Activated CD4-positive, alpha-beta memory T cell treated with anti-CD3 and anti-CD28 coated beads for 36 hours (primary cell): ENCODE measurements at regions of chr2 and their contacts with region 1.

Region 1: GRCh38 chr2:204108330-204108751 is 171.8 kb downstream of the ICOS start:
- DNase-seq: peak; percentile 78
- H3K4me3 Mint-ChIP-seq: peak overlapping the region; percentile 55
- H3K27ac Mint-ChIP-seq: peak overlapping the region; percentile 90
- H3K4me1 Mint-ChIP-seq: peaks cover 71% of the 10 kb centered on the region
- H3K27me3 Mint-ChIP-seq: peaks cover 4% of the 10 kb centered on the region

Region 2: GRCh38 chr2:204060841-204061240 is 47.5 kb before region 1 on chr2:
- CTCF ChIA-PET with region 1: no interaction called
- POLR2A ChIA-PET with region 1: no interaction called
- intact Hi-C with region 1: no loop called
- DNase-seq: no peak
- H3K4me3 Mint-ChIP-seq: no peak overlapping the region
- H3K27ac Mint-ChIP-seq: no peak overlapping the region
- H3K4me1 Mint-ChIP-seq: no peaks in the 10 kb centered on the region
- H3K27me3 Mint-ChIP-seq: no peaks in the 10 kb centered on the region

Region 3: GRCh38 chr2:204072443-204073324 is 35.7 kb before region 1 on chr2:
- CTCF ChIA-PET with region 1: interaction called, 22 read pairs
- POLR2A ChIA-PET with region 1: no interaction called
- intact Hi-C with region 1: loop called (anchors 2 kb)
- DNase-seq: peak; percentile 85
- H3K4me3 Mint-ChIP-seq: no peak overlapping the region
- H3K27ac Mint-ChIP-seq: no peak overlapping the region
- H3K4me1 Mint-ChIP-seq: no peaks in the 10 kb centered on the region
- H3K27me3 Mint-ChIP-seq: peaks cover 3% of the 10 kb centered on the region

Region 4: DNA sequence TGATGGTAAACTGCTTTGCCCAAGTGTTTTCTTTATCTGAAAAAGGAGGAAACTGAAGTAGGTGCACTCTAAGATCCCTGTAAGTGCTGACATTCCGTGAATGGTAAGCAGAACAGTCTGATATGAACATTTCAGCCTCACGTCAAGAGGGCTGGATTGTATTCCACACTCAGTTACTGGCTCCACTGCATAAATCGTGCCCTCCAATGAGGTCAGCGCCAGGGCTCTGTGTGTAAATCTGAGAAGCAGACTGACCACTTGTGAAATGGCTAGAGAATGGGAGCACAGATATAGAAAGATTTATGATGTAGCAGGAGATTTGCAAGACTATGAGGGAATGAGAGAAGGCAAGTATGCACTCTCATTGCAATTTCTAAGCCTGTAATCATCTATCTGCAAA is 18.8 kb before region 1 on chr2:
- CTCF ChIA-PET with region 1: no interaction called
- POLR2A ChIA-PET with region 1: no interaction called
- intact Hi-C with region 1: no loop called
- DNase-seq: no peak
- H3K4me3 Mint-ChIP-seq: no peak overlapping the region
- H3K27ac Mint-ChIP-seq: no peak overlapping the region
- H3K4me1 Mint-ChIP-seq: no peaks in the 10 kb centered on the region
- H3K27me3 Mint-ChIP-seq: peaks cover 1% of the 10 kb centered on the region

Region 5: GRCh38 chr2:204691911-204692510 is 583.7 kb after region 1 on chr2:
- CTCF ChIA-PET with region 1: no interaction called
- POLR2A ChIA-PET with region 1: no interaction called
- intact Hi-C with region 1: loop called (anchors 1 kb)
- DNase-seq: peak; percentile 18
- H3K4me3 Mint-ChIP-seq: no peak overlapping the region
- H3K27ac Mint-ChIP-seq: no peak overlapping the region
- H3K4me1 Mint-ChIP-seq: peaks cover 9% of the 10 kb centered on the region
- H3K27me3 Mint-ChIP-seq: peaks cover 2% of the 10 kb centered on the region

Region 6: GRCh38 chr2:205077159-205077558 is 968.8 kb after region 1 on chr2:
- CTCF ChIA-PET with region 1: no interaction called
- POLR2A ChIA-PET with region 1: no interaction called
- intact Hi-C with region 1: loop called (anchors 10 kb)
- DNase-seq: peak; percentile 11
- H3K4me3 Mint-ChIP-seq: no peak overlapping the region
- H3K27ac Mint-ChIP-seq: peak overlapping the region; percentile 43
- H3K4me1 Mint-ChIP-seq: peaks cover 40% of the 10 kb centered on the region
- H3K27me3 Mint-ChIP-seq: no peaks in the 10 kb centered on the region